OCI-LY7 (cell line): ENCODE measurements at regions of chr15 and their contacts with region 1.

Region 1: DNA sequence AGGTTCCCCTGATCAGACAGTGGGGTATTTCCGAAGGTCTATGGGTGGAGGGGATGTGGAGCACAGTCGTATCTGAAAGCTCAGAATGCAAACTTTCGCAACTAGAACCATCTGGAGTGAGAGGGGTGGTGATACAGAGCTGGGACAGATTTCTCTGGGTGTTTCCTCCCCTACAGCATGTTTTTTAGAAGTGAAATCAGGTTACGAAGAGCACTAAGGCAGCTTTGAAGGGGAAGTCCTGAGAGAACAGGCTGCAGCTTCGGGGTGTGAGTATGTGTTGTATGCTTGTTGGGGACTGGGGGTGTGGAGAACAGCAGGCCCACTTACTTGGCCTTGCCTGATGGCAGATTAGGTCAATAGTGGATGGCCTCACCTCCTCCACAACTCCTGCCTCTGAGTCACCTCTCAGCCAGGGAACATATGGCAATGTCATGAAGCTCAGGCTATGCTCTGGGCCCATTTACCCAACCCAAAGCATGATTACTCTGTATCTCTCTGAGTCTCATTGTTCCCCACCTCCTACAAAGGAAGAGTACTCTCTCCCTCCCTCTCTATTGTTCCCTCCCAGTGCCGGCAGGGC is 107.2 kb upstream of the RASGRP1 start:
- DNase-seq: peak; percentile 27
- H3K4me3 ChIP-seq: no peak overlapping the region
- H3K27ac ChIP-seq: peak overlapping the region; percentile 69
- H3K4me1 ChIP-seq: peaks cover 87% of the 10 kb centered on the region
- CTCF ChIP-seq: no peak

Region 2: DNA sequence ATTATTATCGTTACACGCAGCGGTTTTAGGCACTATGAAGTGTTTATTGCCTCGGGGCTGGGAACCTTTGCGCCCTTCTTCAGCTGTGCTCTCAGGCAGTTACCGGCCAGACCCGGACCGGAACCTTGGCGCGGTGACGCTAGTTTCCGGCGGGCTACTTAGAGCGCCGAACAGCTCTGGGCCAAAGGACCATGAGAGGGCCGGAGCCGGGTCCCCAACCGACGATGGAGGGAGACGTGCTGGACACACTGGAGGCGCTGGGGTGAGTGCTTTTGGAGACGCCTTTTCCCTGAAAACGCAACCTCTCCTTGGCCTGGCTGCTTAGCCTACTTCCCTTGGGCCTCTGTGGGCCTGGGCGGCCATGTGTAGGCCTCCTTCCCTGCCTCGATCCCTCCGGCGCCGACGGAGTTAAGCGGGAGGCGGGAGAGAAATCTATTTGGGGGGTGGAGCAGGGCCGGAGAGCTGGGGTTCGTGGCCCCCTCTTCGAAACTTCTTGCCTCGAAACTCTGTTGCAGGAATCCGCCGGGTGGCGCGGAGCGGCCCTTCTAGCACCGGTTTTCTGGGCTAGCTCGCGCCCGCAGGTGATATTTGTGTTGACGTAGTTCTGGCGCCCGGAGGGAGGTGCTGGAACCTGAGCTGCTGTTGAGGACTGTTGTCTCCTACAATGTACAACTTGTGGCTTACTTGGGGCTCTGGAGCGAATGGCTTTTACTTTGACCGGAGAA is 217.6 kb before region 1 on chr15 and contains the start of gene FAM98B:
- CTCF ChIA-PET with region 1: no interaction called
- POLR2A ChIA-PET with region 1: interaction called, 3 read pairs
- intact Hi-C with region 1: loop called (anchors 5 kb)
- DNase-seq: peak; percentile 88
- H3K4me3 ChIP-seq: peak within 1 kb of the TSS; percentile 86
- H3K27ac ChIP-seq: peak within 1 kb of the TSS; percentile 72
- H3K4me1 ChIP-seq: peaks cover 15% of the 10 kb centered on the region
- CTCF ChIP-seq: peak; percentile 56
- total RNA-seq, gene FAM98B: 8.5 and 17.0 TPM in 2 replicates

Region 3: GRCh38 chr15:38651328-38652038 is 20.3 kb before region 1 on chr15:
- CTCF ChIA-PET with region 1: no interaction called
- POLR2A ChIA-PET with region 1: interaction called, 59 read pairs
- intact Hi-C with region 1: loop called (anchors 1 kb)
- DNase-seq: peak; percentile 88
- H3K4me3 ChIP-seq: peak overlapping the region; percentile 53
- H3K27ac ChIP-seq: peak overlapping the region; percentile 93
- H3K4me1 ChIP-seq: peaks cover 40% of the 10 kb centered on the region
- CTCF ChIP-seq: no peak

Region 4: GRCh38 chr15:38660738-38661137 is 11.0 kb before region 1 on chr15:
- CTCF ChIA-PET with region 1: no interaction called
- POLR2A ChIA-PET with region 1: interaction called, 25 read pairs
- intact Hi-C with region 1: no loop called
- DNase-seq: no peak
- H3K4me3 ChIP-seq: no peak overlapping the region
- H3K27ac ChIP-seq: no peak overlapping the region
- H3K4me1 ChIP-seq: peaks cover 12% of the 10 kb centered on the region
- CTCF ChIP-seq: no peak

Region 5: GRCh38 chr15:38683382-38684242 is 11.8 kb after region 1 on chr15:
- CTCF ChIA-PET with region 1: interaction called, 13 read pairs
- POLR2A ChIA-PET with region 1: interaction called, 8 read pairs
- intact Hi-C with region 1: no loop called
- DNase-seq: peak; percentile 85
- H3K4me3 ChIP-seq: no peak overlapping the region
- H3K27ac ChIP-seq: no peak overlapping the region
- H3K4me1 ChIP-seq: peaks cover 18% of the 10 kb centered on the region
- CTCF ChIP-seq: peak; percentile 99

Region 6: GRCh38 chr15:38714309-38715072 is 42.7 kb after region 1 on chr15:
- CTCF ChIA-PET with region 1: no interaction called
- POLR2A ChIA-PET with region 1: no interaction called
- intact Hi-C with region 1: no loop called
- DNase-seq: no peak
- H3K4me3 ChIP-seq: no peak overlapping the region
- H3K27ac ChIP-seq: no peak overlapping the region
- H3K4me1 ChIP-seq: no peaks in the 10 kb centered on the region
- CTCF ChIP-seq: no peak

Region 7: GRCh38 chr15:38809621-38810020 is 137.9 kb after region 1 on chr15:
- CTCF ChIA-PET with region 1: no interaction called
- POLR2A ChIA-PET with region 1: no interaction called
- intact Hi-C with region 1: no loop called
- DNase-seq: no peak
- H3K4me3 ChIP-seq: no peak overlapping the region
- H3K27ac ChIP-seq: no peak overlapping the region
- H3K4me1 ChIP-seq: no peaks in the 10 kb centered on the region
- CTCF ChIP-seq: no peak